ENCODE measurements at regions of chr1 and their contacts with region 1.

Region 1: GRCh38 chr1:212035123-212035834 is at the starts of genes DTL and INTS7:
- DNase-seq: peak; percentile 98 to 100 (median 99)
- ATAC-seq: peak; percentile 95
- H3K4me3 ChIP-seq: peak within 1 kb of the TSS; percentile 30 to 43
- H3K27ac ChIP-seq: peak within 1 kb of the TSS; percentile 81 to 90 (median 84)
- H3K4me1 ChIP-seq: peaks cover 30% of the 10 kb centered on the region
- H3K27me3 ChIP-seq: no peaks in the 10 kb centered on the region
- CTCF ChIP-seq: peak; percentile 83 to 100 (median 92)
- POLR2A ChIP-seq: peak in 2 of 3 donors; percentile 76
- total RNA-seq, gene DTL: under 0.01 TPM in 1 of 2 donors, not detected in the other
- total RNA-seq, gene INTS7: 6.6 to 8.6 TPM

Region 2: DNA sequence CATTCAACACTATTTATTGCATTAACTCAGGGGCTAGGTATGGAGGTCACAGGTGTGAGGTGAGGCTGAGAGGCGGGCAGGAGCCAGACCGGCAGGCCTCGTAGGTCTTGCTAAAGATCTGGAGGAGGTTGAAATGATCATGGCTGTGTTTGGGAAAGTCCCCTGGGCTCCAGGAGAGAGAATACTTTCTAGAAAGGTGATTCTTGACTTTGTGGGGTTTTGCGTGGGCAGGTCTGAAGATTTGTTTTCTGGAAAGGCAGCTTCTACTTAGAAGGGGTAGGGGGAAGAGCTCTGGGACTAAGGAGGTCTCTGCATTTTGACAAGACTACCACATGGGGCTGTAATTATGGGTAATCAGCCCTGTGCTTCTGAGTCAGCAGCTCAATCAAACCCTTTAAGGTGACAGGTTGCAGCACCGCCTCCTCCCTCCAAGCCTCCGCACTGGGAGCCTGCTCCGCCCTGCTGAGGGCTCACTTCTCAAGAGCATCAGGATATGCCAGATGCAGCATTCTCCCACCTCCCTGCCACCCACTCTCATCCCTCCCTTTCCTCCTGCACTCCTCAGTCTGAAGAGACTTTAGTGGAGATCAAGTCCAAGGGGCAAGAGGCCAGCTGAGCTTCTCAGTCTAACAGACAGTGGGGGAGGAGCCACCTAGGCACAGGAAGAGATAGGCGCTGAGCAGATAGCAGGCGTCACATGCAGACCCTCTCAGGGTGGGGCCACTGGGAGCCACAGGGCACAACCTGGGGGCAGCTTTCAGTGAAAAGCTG is 486.8 kb before region 1 on chr1:
- intact Hi-C with region 1: no loop called
- DNase-seq: no peak
- ATAC-seq: no peak
- H3K4me3 ChIP-seq: no peak overlapping the region
- H3K27ac ChIP-seq: no peak overlapping the region
- H3K4me1 ChIP-seq: no peaks in the 10 kb centered on the region
- H3K27me3 ChIP-seq: no peaks in the 10 kb centered on the region
- CTCF ChIP-seq: no peak
- POLR2A ChIP-seq: no peak

Region 3: DNA sequence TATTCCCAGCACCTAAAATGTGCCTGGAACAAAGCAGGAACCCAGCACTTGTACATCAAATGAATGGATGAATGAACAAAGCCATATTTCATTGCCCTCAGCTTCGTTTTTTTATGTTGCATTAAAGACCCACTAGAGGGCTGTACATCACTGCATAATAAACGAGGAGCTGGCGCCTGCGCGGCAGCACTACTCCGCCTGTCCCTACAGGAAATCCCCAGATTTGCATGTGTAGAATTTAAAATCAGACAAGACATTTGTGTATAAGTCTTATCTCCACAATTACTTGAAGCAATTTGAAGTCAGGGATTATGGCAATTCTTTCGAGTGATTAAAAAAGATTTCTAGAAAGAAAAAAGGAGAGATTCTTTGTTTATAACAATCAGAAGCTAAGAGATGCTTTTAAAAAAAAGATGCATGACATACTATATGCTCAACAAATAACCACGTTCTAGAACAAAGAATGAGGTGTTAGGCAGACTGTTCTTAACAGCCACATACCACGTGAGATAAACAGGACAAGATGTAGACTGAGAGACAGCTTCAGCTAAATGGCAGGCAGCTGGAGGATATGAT is 354.4 kb before region 1 on chr1:
- intact Hi-C with region 1: loop called (anchors 10 kb)
- DNase-seq: peak; percentile 68 to 80 (median 78)
- ATAC-seq: peak; percentile 92
- H3K4me3 ChIP-seq: no peak overlapping the region
- H3K27ac ChIP-seq: no peak overlapping the region
- H3K4me1 ChIP-seq: peaks cover 3% of the 10 kb centered on the region
- H3K27me3 ChIP-seq: no peaks in the 10 kb centered on the region
- CTCF ChIP-seq: peak; percentile 40 to 95 (median 87)
- POLR2A ChIP-seq: no peak